Right ventricle myocardium inferior (tissue), 1 donor: ENCODE measurements at regions of chr6 and their contacts with region 1.

Region 1: GRCh38 chr6:5302995-5303622 is 41.8 kb downstream of the FARS2 start:
- DNase-seq: no peak
- ATAC-seq: peak; percentile 75

Region 2: DNA sequence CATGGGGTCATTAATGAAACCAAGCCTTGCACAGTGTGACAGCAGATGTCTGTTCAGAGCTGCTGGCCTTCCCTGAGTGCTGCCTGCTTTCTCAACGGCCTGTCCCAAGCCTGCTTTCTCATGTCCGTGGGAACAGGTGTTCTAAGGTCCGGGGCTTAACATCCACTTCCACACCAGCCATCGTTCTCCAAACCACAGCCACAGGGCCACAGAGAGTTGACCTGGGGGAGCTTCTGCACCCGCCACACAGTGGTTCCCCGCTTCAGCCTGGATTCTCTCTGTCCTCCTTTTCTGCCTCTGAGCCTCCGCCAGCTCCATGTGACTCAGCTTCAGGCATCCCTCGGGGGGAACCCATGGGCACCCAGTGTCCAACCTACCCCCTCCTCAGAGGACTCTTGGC is 244.9 kb before region 1 on chr6:
- intact Hi-C with region 1: loop called (anchors 5 kb)
- DNase-seq: no peak
- ATAC-seq: no peak

Region 3: DNA sequence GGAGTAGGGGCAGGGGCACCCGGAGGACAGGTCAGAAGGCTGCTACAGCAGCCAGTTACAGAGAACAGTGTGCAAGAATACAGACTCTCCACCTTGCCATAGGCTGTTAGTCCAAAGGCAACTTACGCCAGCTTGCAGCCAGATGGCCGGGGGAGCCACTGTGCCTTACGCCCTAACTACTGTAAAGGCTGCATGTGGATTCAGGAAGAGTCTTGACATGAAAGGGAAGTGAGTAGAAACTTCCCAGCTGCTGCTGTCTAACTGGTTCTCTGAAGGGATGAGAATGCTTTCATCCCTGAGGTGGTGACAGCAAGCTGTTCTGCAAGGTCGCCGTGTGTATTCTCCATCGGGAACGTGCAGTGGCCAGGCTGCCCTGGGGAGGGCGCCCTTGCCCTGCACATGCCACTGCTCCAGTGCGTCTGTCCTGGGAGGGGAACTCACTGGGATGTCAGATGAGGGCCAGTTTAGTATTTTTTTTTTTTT is 88.5 kb before region 1 on chr6:
- intact Hi-C with region 1: loop called (anchors 1 kb)
- DNase-seq: peak; percentile 72
- ATAC-seq: peak; percentile 90